Prostate gland (tissue), 2 donors: ENCODE measurements at regions of chr15 and their contacts with region 1.

Region 1: GRCh38 chr15:75201609-75202250 is at the start of gene C15orf39:
- DNase-seq: peak; percentile 56
- H3K4me3 ChIP-seq: peak within 1 kb of the TSS; percentile 73 to 78
- H3K27ac ChIP-seq: peak within 1 kb of the TSS; percentile 84 to 85
- H3K4me1 ChIP-seq: peaks cover 7% of the 10 kb centered on the region
- H3K27me3 ChIP-seq: no peaks in the 10 kb centered on the region
- CTCF ChIP-seq: peak; percentile 88 to 99 (median 94)
- POLR2A ChIP-seq: peak; percentile 97
- total RNA-seq, gene C15orf39: 17.9 to 96.3 TPM

Region 2: DNA sequence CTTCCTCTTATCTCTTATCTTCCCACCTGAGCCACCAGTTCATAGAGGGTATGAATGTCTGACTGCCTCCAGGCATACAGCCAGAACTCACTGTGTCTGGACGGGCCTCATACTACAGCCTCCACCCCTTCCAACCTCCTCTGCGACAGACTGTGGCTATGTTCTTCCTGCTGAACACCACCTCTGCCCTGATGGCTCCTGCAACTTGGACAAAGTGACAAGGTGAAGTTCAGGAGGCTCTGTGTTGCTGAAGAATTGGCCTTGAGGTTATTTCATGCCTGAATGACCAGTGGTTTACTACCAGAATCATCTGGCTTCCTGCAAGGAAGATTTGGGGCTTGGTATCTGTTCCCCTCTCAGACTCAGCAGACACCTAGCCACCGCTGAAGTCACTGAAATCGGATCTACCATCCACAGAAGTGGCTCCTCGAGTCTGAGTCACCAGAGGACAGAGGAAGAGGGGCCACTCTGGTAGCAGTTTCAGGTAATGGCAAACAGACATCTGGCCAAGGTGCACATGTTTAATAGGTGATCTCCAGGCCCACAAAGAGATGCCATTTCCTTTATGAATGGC is 344.6 kb before region 1 on chr15:
- intact Hi-C with region 1: no loop called
- DNase-seq: no peak
- H3K4me3 ChIP-seq: no peak overlapping the region
- H3K27ac ChIP-seq: no peak overlapping the region
- H3K4me1 ChIP-seq: peaks cover 8% of the 10 kb centered on the region
- H3K27me3 ChIP-seq: no peaks in the 10 kb centered on the region
- CTCF ChIP-seq: no peak
- POLR2A ChIP-seq: no peak

Region 3: DNA sequence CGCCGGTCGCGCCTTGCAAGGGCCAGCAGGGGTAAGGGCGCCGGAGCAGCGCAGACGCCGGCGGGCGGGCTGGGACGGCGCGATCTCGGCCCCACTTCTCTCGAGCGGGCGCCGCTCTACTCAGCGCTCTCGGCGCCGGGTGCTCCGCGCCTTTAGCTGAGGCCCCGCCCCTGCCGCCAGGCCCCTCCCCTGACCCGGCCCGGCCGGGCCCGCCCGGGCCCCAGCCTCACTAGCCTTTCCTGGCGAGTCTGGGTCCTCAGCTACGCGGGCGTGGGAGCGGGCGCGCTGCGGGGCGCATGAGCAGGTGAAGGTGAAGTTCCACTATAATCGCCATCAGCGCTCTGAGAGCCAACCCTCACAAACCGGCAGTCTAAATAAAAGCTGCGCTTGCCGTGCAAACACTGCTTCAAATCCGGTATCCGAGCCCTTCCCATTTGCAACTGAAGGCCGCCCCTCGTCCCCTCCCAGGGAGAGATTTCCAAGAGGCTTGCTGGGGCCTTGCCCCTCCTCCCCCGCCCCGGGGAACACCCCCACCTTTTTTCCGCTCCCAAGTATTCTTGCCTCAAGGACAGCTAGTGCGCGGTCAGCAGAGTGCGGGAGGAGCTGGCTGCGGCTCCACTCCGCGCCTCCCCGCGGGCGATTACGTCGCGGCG is 245.0 kb before region 1 on chr15 and contains the start of gene RPP25:
- intact Hi-C with region 1: loop called (anchors 5 kb)
- DNase-seq: peak; percentile 65
- H3K4me3 ChIP-seq: peak within 1 kb of the TSS; percentile 44 to 45
- H3K27ac ChIP-seq: peak within 1 kb of the TSS; percentile 48 to 62
- H3K4me1 ChIP-seq: peaks cover 9% of the 10 kb centered on the region
- H3K27me3 ChIP-seq: no peaks in the 10 kb centered on the region
- CTCF ChIP-seq: no peak
- POLR2A ChIP-seq: peak; percentile 54
- total RNA-seq, gene RPP25: 3.8 to 17.6 TPM

Region 4: GRCh38 chr15:75029378-75030022 is 172.2 kb before region 1 on chr15:
- intact Hi-C with region 1: loop called (anchors 1 kb)
- DNase-seq: peak; percentile 87
- H3K4me3 ChIP-seq: no peak overlapping the region
- H3K27ac ChIP-seq: no peak overlapping the region
- H3K4me1 ChIP-seq: no peaks in the 10 kb centered on the region
- H3K27me3 ChIP-seq: no peaks in the 10 kb centered on the region
- CTCF ChIP-seq: peak; percentile 95 to 99 (median 98)
- POLR2A ChIP-seq: no peak